Right cardiac atrium (tissue), 5 donors: ENCODE measurements at regions of chr6 and their contacts with region 1.

Region 1: DNA sequence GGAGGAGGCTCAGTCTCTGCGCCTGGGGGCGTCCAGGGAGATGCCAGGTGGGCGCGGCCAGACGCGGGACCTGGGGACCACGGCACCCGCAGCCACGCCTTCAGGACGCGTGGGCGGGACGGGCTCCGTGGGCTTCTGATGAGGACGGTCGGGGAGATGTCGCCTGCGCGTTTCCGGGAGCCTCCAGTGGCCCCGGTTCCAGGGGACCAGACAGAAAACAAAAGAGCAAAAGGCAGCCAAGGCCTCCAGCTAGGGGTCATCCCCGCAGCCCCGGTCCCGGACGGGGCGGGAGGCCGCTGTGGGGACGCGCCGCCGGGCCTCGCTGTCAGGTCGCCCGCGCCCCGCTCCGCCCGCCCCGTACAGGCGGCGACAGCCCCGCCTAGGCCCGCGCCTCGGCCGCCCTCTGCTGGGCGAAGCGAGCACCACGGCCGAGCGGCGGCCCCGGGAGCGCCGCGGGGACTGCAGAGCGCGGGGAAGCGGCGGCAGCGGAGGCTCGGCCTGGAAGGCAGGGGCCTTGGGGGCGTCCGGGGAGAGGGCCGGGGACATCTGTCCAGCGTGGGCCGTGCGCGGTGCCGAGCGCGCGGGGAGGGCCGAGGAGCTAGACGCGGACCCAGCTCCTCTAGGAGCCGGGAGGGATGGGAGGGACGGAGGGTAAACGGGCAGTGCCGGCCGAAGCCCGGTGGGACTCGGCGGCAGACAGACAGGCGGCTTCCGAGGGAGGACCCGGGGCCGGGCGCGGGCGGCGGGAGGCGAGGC is 48.7 kb downstream of the TMEM242 start:
- DNase-seq: peak; percentile 79 to 91 (median 90)
- ATAC-seq: peak; percentile 93 to 95
- H3K4me3 ChIP-seq: peak overlapping the region; percentile 62
- H3K27ac ChIP-seq: peak overlapping the region; percentile 39
- H3K4me1 ChIP-seq: no peaks in the 10 kb centered on the region
- H3K27me3 ChIP-seq: no peaks in the 10 kb centered on the region

Region 2: GRCh38 chr6:156564807-156565149 is 709.9 kb before region 1 on chr6:
- intact Hi-C with region 1: no loop called
- DNase-seq: no peak
- ATAC-seq: no peak
- H3K4me3 ChIP-seq: no peak overlapping the region
- H3K27ac ChIP-seq: no peak overlapping the region
- H3K4me1 ChIP-seq: no peaks in the 10 kb centered on the region
- H3K27me3 ChIP-seq: no peaks in the 10 kb centered on the region

Region 3: DNA sequence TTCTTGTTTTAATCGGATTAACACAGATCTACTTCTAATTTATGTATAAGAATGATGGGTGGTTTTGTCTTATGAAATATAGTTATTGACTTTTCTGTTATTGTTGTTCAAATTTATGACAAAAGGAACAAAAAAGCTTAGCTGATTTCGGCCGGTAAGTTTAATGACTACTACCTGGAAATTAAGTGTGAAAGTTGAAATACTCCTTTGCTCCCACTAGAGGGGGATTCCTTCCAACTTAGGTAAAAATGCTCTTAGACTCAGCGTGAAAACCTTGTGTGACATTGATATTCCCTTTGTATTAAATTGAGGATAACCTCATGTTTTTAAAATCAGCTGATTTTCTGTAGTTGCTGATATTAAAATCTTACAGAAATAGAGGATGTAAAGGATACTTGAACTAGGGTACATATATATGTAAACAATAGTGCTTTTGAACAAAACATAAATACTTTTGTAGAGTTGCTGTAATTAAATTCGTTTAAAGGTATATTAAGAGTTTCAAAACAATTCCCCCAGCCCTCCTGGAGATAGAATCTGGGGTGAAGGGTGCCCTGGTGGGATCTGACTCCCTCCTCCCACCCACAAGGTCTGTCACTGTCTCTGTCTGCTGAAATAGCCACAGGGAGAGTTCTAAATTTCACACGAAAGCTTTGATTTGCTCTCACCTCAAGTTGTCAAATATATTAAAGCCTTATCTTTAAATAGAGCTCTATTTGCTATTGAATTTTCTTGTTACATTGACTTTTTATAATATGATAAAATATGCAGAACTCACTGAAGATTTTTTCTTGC is 240.0 kb before region 1 on chr6:
- intact Hi-C with region 1: loop called in 2 of 4 experiments (anchors 10 kb)
- DNase-seq: no peak
- ATAC-seq: peak; percentile 30 to 67
- H3K4me3 ChIP-seq: no peak overlapping the region
- H3K27ac ChIP-seq: no peak overlapping the region
- H3K4me1 ChIP-seq: peaks cover 9% of the 10 kb centered on the region
- H3K27me3 ChIP-seq: no peaks in the 10 kb centered on the region

Region 4: DNA sequence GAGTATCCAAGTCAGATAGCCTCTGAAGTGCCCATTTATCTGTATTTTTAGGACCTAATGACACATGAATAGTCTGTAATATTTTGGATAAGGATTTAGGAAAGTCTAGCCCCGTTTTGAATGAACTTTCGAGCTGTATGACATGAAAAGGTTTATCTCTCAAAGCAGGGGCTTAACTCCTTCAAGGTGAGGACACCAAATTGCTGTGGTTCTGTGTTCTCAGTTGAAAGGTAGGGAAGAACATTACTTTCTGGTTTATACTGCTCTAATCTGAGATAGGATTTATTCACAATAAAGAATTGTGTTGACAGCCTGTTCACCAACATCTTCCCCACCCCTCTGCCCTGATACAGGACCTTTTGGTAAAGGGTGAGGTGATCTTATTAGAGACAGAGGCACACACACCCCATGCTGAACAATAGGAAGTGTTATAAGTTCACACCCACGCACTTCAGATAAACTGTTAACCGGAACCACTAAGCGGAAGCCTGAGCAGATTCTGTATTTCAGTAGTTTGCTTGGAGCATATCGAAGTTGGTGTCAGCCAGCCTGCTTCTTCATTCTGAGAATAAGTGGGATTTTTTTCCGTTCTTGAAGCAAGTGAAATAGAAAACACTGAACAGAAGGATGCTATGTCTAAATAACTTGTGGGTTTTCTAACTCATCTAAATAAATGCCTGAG is 174.6 kb before region 1 on chr6:
- intact Hi-C with region 1: no loop called
- DNase-seq: no peak
- ATAC-seq: peak; percentile 81 to 91
- H3K4me3 ChIP-seq: no peak overlapping the region
- H3K27ac ChIP-seq: no peak overlapping the region
- H3K4me1 ChIP-seq: peaks cover 3% of the 10 kb centered on the region
- H3K27me3 ChIP-seq: no peaks in the 10 kb centered on the region

Region 5: DNA sequence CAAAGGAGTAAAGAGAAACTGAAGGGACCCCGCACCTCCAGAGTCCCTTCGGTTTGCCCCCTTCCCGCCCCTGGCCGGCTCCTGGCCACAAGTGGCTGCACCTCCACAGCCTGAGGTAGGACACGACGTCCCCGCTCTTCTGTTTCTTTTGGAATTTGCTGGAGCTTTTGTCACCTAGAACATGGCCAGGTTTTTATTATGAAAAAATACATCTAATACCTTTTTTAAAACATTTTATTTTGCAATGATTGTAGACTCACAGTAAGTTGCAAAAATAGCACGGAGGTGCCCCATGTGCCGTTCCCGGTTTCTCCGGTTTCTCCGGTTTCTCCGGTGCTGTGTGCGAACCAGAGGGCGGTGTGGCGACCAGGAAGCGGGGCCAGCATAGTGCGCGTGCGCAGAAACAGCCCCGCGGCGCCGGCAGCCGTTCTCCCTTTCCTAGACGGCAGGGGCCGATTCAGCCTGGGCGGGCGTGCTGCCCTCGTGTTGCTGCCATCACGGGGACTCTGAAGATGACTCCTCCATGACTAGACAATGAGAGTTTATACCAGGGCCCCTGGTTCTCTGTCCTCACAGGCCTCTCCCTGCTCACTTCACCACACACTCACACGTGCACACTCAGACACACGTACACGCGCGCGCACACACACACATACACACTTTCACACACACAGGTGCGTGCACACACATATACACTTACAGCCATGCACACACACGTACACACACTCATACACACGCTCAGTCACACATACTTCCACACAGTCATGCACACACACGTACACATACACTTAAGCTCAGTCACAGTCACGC is 53.4 kb before region 1 on chr6:
- intact Hi-C with region 1: loop called in 1 of 4 experiments (anchors 10 kb)
- DNase-seq: peak; percentile 86 to 93 (median 93)
- ATAC-seq: peak; percentile 65 to 79
- H3K4me3 ChIP-seq: peak overlapping the region; percentile 59
- H3K27ac ChIP-seq: no peak overlapping the region
- H3K4me1 ChIP-seq: no peaks in the 10 kb centered on the region
- H3K27me3 ChIP-seq: no peaks in the 10 kb centered on the region

Region 6: GRCh38 chr6:157229713-157230112 is 44.9 kb before region 1 on chr6:
- intact Hi-C with region 1: loop called in 2 of 4 experiments (anchors 5 to 10 kb)
- DNase-seq: peak in 1 of 3 donors; percentile 28
- ATAC-seq: no peak
- H3K4me3 ChIP-seq: no peak overlapping the region
- H3K27ac ChIP-seq: no peak overlapping the region
- H3K4me1 ChIP-seq: no peaks in the 10 kb centered on the region
- H3K27me3 ChIP-seq: no peaks in the 10 kb centered on the region

Region 7: GRCh38 chr6:157235600-157236039 is 39.0 kb before region 1 on chr6:
- intact Hi-C with region 1: loop called in 2 of 4 experiments (anchors 5 kb)
- DNase-seq: peak; percentile 67 to 85 (median 84)
- ATAC-seq: peak; percentile 72 to 76
- H3K4me3 ChIP-seq: peak overlapping the region; percentile 40
- H3K27ac ChIP-seq: no peak overlapping the region
- H3K4me1 ChIP-seq: peaks cover 2% of the 10 kb centered on the region
- H3K27me3 ChIP-seq: no peaks in the 10 kb centered on the region